Right cardiac atrium (tissue), 5 donors: ENCODE measurements at regions of chr6 and their contacts with region 1.

Region 1: GRCh38 chr6:57316581-57317059 is 810 bp upstream of the PRIM2 start:
- DNase-seq: peak; percentile 80 to 91 (median 84)
- ATAC-seq: peak; percentile 94 to 97
- H3K4me3 ChIP-seq: peak overlapping the region; percentile 96
- H3K27ac ChIP-seq: peak overlapping the region; percentile 72
- H3K4me1 ChIP-seq: peaks cover 6% of the 10 kb centered on the region
- H3K27me3 ChIP-seq: no peaks in the 10 kb centered on the region

Region 2: DNA sequence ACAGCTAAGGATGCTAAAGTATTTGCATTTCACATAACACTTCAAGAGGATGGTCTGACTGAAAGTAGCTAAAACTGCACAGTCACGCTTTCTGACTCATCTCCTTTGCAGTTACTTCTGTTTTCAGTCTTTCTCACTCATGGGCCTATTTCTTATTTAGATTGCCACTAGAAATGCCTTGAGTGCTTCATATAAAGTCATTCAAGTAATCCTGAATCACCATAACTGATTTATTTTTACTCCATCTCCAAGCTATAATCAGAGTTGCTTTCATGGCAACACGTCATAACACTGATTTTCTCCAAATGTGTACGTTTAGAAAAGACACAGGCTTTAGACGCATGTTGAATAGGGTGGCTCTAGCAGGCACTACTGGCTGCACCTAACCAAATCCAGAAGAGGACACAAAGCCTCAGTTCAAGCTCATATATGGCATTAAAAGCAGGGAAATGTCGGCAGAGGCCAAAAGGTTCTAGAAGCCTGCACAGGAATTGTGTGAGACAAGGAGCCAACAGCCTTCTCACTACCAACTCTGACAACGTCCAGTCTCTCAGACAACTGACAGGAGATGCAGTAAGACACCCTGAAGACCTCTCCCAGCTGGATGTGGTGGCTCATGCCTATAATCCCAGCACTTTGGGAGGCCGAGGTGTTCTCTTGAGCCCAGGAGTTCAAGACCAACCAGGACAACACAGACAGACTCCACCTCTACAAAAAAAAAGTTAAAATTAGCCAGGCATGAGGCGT is 425.8 kb before region 1 on chr6:
- intact Hi-C with region 1: no loop called
- DNase-seq: no peak
- ATAC-seq: no peak
- H3K4me3 ChIP-seq: no peak overlapping the region
- H3K27ac ChIP-seq: no peak overlapping the region
- H3K4me1 ChIP-seq: no peaks in the 10 kb centered on the region
- H3K27me3 ChIP-seq: no peaks in the 10 kb centered on the region

Region 3: DNA sequence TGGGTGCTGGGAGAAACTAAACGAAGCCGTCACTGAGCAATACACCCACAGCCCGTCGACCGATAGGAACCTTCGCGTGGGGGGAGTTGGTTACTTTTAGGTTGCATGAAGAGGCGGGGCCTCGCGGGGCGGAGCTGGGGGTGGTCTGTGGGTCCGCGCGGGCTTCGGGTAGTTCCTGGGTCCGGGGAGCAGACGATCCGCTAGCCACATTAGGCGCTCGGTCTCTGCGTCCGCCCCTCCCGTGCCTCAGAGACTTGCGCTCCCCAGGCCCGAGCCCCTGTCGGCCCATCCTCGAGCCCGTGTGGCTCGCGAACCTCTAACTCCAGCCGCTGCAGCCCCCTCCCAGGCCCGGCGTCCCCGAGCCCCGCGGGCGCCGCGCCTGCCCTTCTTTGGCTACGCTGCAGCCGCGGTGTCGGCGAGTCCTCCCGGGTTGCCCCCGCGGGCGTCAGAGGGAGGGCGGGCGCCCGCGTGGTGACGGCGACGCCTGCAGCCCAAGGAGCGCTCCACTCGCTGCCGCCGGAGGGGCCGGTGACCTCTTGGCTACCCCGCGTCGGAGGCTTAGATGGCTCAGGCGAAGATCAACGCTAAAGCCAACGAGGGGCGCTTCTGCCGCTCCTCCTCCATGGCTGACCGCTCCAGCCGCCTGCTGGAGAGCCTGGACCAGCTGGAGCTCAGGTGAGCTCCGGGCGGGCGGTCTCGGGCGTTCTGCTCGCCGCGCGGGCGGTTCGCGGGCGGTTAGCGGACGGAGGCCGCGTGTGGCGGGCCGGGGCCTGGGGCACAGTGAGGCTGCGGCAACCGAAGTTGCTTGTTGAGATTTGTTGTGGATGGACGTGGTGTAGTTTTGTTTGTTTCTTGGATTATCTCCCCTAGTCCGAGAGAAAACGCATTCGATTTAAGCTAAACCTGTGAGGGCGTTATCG is 144.2 kb before region 1 on chr6 and contains the start of gene BAG2:
- intact Hi-C with region 1: loop called in 2 of 4 experiments (anchors 10 kb)
- DNase-seq: peak; percentile 91 to 96 (median 95)
- ATAC-seq: peak; percentile 97 to 98
- H3K4me3 ChIP-seq: peak within 1 kb of the TSS; percentile 73
- H3K27ac ChIP-seq: peak within 1 kb of the TSS; percentile 78
- H3K4me1 ChIP-seq: no peaks in the 10 kb centered on the region
- H3K27me3 ChIP-seq: no peaks in the 10 kb centered on the region
- total RNA-seq, gene BAG2: 11.3 to 17.8 (median 16.0) TPM

Region 4: DNA sequence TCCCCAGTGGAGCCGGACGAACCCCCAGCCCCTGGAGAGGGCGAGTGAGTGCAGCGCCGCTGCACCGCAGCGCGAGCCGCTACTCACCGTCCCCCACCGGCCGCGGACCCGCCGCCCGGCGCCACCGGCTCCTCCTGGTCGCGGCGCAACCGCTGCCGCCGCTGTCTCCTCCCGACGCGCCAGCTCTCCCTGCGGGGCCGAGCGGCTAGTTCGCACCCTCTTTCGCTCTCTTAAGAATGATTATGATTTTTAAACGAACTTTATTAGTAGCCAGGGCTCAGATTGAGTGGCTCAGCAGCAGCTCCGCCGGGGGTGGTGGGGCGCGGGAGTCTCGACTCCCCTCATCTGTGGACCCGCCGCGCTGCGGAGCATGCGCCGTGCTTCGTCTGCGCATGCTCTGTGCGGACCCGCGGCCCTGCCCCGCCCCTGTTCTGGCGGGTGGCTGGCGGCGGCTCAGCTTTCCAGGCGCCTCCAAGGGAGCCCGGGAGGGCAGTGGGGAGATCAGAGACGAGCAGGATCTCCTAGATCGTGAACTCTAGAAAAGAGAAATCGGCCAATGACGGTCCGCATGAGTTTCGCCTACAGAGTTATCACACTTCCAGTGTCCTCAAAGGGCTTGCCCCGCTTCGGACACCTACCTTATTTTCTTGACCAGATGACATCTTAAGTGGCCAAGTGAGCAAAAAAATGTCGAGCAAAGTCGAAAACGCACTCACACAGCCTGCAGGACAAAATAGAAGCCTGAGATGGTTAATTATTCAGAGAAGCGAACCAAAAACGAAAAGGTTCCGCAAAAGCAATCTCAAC is 94.5 kb before region 1 on chr6 and contains the start of gene RAB23:
- intact Hi-C with region 1: loop called in 1 of 4 experiments (anchors 10 kb)
- DNase-seq: peak; percentile 84 to 95 (median 93)
- ATAC-seq: peak; percentile 98 to 99
- H3K4me3 ChIP-seq: peak within 1 kb of the TSS; percentile 77
- H3K27ac ChIP-seq: peak within 1 kb of the TSS; percentile 81
- H3K4me1 ChIP-seq: no peaks in the 10 kb centered on the region
- H3K27me3 ChIP-seq: no peaks in the 10 kb centered on the region
- total RNA-seq, gene RAB23: 11.1 to 20.7 (median 11.5) TPM